SK-N-SH (cell line): ENCODE measurements at regions of chr16 and their contacts with region 1.

Region 1: GRCh38 chr16:17556276-17557052 is 85.7 kb upstream of the XYLT1 start:
- DNase-seq: peak; percentile 58
- H3K4me3 ChIP-seq: no peak overlapping the region
- H3K27ac ChIP-seq: peak overlapping the region; percentile 11 to 89; a peak in 3 of 4 replicates
- H3K4me1 ChIP-seq: peaks cover 8 to 16% of the 10 kb centered on the region in 2 experiments; a peak in 3 of 4 replicates
- H3K27me3 ChIP-seq: no peaks in the 10 kb centered on the region
- CTCF ChIP-seq: peak; percentile 80
- EP300 ChIP-seq: no peak
- RAD21 ChIP-seq: peak; percentile 73

Region 2: GRCh38 chr16:17529982-17530765 is 26.3 kb before region 1 on chr16:
- CTCF ChIA-PET with region 1: interaction called, 10 read pairs
- POLR2A ChIA-PET with region 1: no interaction called
- DNase-seq: no peak
- H3K4me3 ChIP-seq: no peak overlapping the region
- H3K27ac ChIP-seq: no peak overlapping the region
- H3K4me1 ChIP-seq: no peaks in the 10 kb centered on the region
- H3K27me3 ChIP-seq: no peaks in the 10 kb centered on the region
- CTCF ChIP-seq: no peak
- EP300 ChIP-seq: no peak
- RAD21 ChIP-seq: no peak

Region 3: GRCh38 chr16:17571499-17572093 is 15.1 kb after region 1 on chr16:
- CTCF ChIA-PET with region 1: interaction called, 13 read pairs
- POLR2A ChIA-PET with region 1: interaction called, 4 read pairs
- DNase-seq: no peak
- H3K4me3 ChIP-seq: no peak overlapping the region
- H3K27ac ChIP-seq: no peak overlapping the region
- H3K4me1 ChIP-seq: peaks cover 0 to 25% of the 10 kb centered on the region in 2 experiments; a peak in 1 of 4 replicates
- H3K27me3 ChIP-seq: no peaks in the 10 kb centered on the region
- CTCF ChIP-seq: no peak
- EP300 ChIP-seq: no peak
- RAD21 ChIP-seq: no peak